ENCODE measurements at regions of chr5 and their contacts with region 1.

Region 1: GRCh38 chr5:55868846-55869245 is 17.7 kb downstream of the IL31RA start:
- DNase-seq: peak; percentile 80
- H3K4me3 Mint-ChIP-seq: no peak overlapping the region
- H3K27ac Mint-ChIP-seq: no peak overlapping the region
- H3K4me1 Mint-ChIP-seq: peaks cover 17% of the 10 kb centered on the region
- H3K27me3 Mint-ChIP-seq: peaks cover 2% of the 10 kb centered on the region

Region 2: DNA sequence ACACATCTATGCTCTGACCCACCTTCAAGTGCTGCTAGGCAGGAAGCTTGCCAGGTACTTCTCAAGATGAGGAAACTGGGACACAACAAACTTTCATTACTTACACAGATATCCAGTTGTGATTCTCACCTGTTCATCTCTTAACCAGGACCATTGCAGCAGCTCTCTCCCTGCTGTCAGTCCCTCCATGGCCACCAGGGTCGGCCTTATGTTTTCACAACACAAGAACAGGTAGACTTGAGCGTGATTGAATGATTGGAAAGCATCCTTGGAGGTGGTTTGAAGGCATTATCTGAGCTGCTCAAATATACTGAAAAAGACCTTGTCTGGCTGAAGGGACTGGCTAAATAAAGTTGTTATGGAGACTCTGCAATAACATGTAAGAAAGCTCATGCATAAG is 466.6 kb before region 1 on chr5:
- CTCF ChIA-PET with region 1: no interaction called
- POLR2A ChIA-PET with region 1: no interaction called
- intact Hi-C with region 1: no loop called
- DNase-seq: no peak
- H3K4me3 Mint-ChIP-seq: no peak overlapping the region
- H3K27ac Mint-ChIP-seq: no peak overlapping the region
- H3K4me1 Mint-ChIP-seq: no peaks in the 10 kb centered on the region
- H3K27me3 Mint-ChIP-seq: no peaks in the 10 kb centered on the region

Region 3: GRCh38 chr5:55711968-55712859 is 156.6 kb before region 1 on chr5 and contains the start of gene SLC38A9:
- CTCF ChIA-PET with region 1: no interaction called
- POLR2A ChIA-PET with region 1: no interaction called
- intact Hi-C with region 1: loop called (anchors 5 kb)
- DNase-seq: peak; percentile 96
- H3K4me3 Mint-ChIP-seq: peak within 1 kb of the TSS; percentile 96
- H3K27ac Mint-ChIP-seq: peak within 1 kb of the TSS; percentile 80
- H3K4me1 Mint-ChIP-seq: peaks cover 33% of the 10 kb centered on the region
- H3K27me3 Mint-ChIP-seq: no peaks in the 10 kb centered on the region
- total RNA-seq, gene SLC38A9: 14.2 to 15.0 TPM

Region 4: GRCh38 chr5:55856516-55857246 is 12.2 kb before region 1 on chr5:
- CTCF ChIA-PET with region 1: interaction called, 4 read pairs
- POLR2A ChIA-PET with region 1: interaction called, 3 read pairs
- intact Hi-C with region 1: loop called (anchors 1 kb)
- DNase-seq: peak; percentile 46
- H3K4me3 Mint-ChIP-seq: no peak overlapping the region
- H3K27ac Mint-ChIP-seq: peak overlapping the region; percentile 32
- H3K4me1 Mint-ChIP-seq: peaks cover 34% of the 10 kb centered on the region
- H3K27me3 Mint-ChIP-seq: no peaks in the 10 kb centered on the region

Region 5: DNA sequence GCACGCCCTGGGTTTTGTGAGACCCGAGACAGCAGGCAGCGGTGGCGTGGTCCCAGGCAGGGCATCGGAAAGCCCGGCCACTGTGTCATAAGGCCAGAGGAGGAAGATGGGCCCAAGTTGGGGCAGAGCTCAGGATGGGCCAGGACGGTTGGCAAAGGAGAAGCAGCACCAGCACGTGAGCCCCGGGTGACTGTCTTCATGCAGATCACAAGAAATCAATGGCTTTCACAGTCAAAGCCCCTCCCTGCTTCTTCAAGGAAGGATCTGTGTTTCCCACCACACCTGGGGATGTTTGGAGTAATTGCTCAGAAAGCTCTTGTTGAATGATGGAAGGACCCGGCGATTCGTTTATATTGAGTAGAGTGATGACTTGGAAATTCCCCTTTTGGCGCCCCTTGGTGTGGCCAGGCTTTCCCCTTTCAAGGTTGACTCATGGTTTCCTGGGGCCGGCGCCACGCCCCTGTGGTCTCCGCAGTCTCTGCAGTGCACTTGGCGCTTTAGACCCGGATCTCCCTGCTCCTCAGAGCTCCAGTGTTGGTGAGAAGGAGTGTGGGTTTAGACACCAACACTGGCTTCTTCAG is 34.4 kb after region 1 on chr5:
- CTCF ChIA-PET with region 1: no interaction called
- POLR2A ChIA-PET with region 1: interaction called, 3 read pairs
- intact Hi-C with region 1: loop called (anchors 1 kb)
- DNase-seq: peak; percentile 89
- H3K4me3 Mint-ChIP-seq: peak overlapping the region; percentile 24
- H3K27ac Mint-ChIP-seq: no peak overlapping the region
- H3K4me1 Mint-ChIP-seq: peaks cover 35% of the 10 kb centered on the region
- H3K27me3 Mint-ChIP-seq: peaks cover 2% of the 10 kb centered on the region

Region 6: GRCh38 chr5:55923177-55923771 is 54.4 kb after region 1 on chr5:
- CTCF ChIA-PET with region 1: interaction called, 3 read pairs
- POLR2A ChIA-PET with region 1: no interaction called
- intact Hi-C with region 1: loop called (anchors 5 kb)
- DNase-seq: peak; percentile 34
- H3K4me3 Mint-ChIP-seq: peak overlapping the region; percentile 77
- H3K27ac Mint-ChIP-seq: no peak overlapping the region
- H3K4me1 Mint-ChIP-seq: peaks cover 23% of the 10 kb centered on the region
- H3K27me3 Mint-ChIP-seq: no peaks in the 10 kb centered on the region

Region 7: GRCh38 chr5:55982957-55983381 is 114.1 kb after region 1 on chr5:
- CTCF ChIA-PET with region 1: no interaction called
- POLR2A ChIA-PET with region 1: no interaction called
- intact Hi-C with region 1: loop called (anchors 2 kb)
- DNase-seq: no peak
- H3K4me3 Mint-ChIP-seq: peak overlapping the region; percentile 20
- H3K27ac Mint-ChIP-seq: peak overlapping the region; percentile 64
- H3K4me1 Mint-ChIP-seq: peaks cover 80% of the 10 kb centered on the region
- H3K27me3 Mint-ChIP-seq: no peaks in the 10 kb centered on the region